ENCODE measurements at regions of chr9 and their contacts with region 1.

Region 1: DNA sequence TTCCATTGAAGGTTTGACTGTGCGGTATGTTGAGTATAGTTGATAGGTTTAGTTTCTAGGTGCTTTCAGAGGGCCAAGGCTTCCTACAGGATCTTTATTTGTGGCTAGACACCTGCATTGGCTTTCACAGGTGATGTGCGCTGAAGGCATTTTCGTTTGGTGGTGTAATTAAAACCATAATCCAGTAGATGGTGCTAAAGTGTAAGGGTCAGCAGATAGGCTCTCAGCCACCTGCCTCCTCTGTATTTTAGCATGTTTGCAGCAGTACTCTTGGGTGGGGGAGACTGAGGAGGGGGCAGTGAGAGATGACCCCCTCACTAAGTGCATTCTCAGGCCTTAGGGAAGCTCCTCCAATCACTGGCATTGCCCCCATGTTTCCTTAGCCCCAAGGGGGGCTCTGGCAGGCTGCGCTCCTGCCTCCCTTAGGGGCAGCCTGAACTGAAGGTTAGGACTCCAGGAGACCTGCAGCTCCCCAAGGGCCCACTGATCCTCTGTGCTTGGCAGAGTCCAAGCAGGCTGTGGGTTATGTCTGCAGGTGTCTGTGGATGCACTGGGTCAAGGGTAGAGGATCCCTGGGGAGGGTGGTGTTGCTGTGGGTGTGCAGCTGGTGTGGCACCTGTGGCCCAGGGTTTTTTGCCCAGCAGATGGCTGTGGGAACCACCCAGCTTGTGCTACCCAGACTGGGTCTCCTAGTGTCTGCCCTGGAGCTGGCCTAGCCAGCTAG is 23.4 kb downstream of the CDK20 start:
- DNase-seq: no peak
- ATAC-seq: peak; percentile 54
- H3K4me3 ChIP-seq: no peak overlapping the region
- H3K27ac ChIP-seq: no peak overlapping the region
- H3K4me1 ChIP-seq: no peaks in the 10 kb centered on the region
- H3K27me3 ChIP-seq: no peaks in the 10 kb centered on the region
- CTCF ChIP-seq: peak; percentile 29 to 52 (median 33); a peak in 4 of 6 replicates
- EP300 ChIP-seq: no peak
- POLR2A ChIP-seq: no peak
- RAD21 ChIP-seq: peak; percentile 56

Region 2: DNA sequence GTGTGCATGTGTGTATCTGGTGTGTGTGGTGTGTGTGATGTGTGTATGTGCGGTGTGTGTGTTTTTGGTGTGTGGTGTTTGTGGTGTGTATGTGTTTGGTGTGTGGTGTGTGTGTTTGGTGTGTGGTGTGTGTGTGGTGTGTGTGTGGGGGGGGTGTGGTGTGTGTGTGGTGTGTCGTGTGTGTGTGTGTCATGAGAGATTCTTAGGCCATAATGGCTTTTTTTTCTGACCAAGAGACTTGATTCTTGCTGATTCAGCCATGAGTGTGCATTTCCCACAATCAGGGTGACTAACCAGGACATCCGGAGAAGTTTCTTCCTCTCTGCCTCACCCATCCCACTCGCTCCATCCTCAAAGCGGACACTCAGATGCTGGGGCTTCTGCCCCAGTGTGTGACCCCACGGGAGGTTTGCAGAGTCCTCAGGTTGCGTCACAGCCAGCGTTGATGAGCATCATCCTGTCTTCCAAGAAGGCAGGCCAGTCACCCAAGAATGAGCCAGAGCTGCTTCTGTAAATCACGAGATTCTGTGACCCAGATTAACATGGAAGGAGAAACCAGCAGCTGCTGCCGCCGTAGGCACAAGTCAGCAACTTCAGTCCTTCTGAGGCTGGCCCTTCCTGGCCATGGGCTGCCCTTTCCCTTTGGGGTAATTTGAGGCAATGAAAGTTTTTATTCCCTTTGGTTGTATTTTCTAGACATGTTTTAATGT is 237.5 kb before region 1 on chr9:
- CTCF ChIA-PET with region 1: no interaction called
- POLR2A ChIA-PET with region 1: no interaction called
- RAD21 ChIA-PET with region 1: no interaction called
- SMC1A ChIA-PET with region 1: no interaction called
- in situ Hi-C with region 1: no loop called
- intact Hi-C with region 1: no loop called
- DNase-seq: no peak
- ATAC-seq: no peak
- H3K4me3 ChIP-seq: no peak overlapping the region
- H3K27ac ChIP-seq: no peak overlapping the region
- H3K4me1 ChIP-seq: peaks cover 11% of the 10 kb centered on the region; the same call in 1 of the 2 replicates
- H3K27me3 ChIP-seq: peaks cover 0 to 2% of the 10 kb centered on the region in 2 experiments; a peak in 1 of 4 replicates
- CTCF ChIP-seq: no peak
- EP300 ChIP-seq: no peak
- POLR2A ChIP-seq: no peak
- RAD21 ChIP-seq: no peak

Region 3: DNA sequence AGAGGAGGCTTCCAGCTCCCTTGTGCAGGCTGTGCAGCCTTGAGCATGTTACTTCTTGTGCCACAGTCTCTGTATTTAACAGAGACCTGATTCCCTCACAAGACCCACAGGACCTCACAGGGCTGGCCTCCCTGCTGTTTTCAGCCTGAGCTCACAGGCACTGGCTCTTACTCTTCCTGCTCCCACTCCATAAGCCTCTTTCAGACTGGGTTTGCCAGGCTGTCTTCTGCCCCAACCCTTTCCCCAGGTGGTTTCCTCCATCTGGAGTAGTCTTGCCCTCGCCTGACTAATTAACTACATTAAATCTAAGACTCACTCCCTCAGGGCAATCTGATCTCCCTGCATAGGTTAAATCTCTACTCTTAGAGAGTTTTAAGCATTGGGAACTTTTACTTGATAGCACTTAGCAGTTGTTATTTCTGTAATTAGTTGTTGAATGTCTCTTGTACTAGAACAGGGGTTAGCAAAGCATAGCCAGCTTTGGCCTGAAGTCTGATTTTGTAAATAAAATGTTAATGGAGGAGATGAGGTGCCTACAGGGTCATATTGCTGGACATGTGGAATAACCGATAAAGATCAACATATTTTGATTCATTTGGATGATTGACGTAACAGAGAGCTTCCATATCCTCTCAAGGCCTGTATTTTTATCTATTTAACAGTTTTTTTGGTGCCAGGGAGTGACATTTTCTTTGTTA is 96.9 kb before region 1 on chr9:
- CTCF ChIA-PET with region 1: no interaction called
- POLR2A ChIA-PET with region 1: no interaction called
- RAD21 ChIA-PET with region 1: no interaction called
- SMC1A ChIA-PET with region 1: no interaction called
- in situ Hi-C with region 1: no loop called
- intact Hi-C with region 1: no loop called
- DNase-seq: no peak
- ATAC-seq: no peak
- H3K4me3 ChIP-seq: no peak overlapping the region
- H3K27ac ChIP-seq: no peak overlapping the region
- H3K4me1 ChIP-seq: no peaks in the 10 kb centered on the region
- H3K27me3 ChIP-seq: no peaks in the 10 kb centered on the region
- CTCF ChIP-seq: no peak
- EP300 ChIP-seq: no peak
- POLR2A ChIP-seq: no peak
- RAD21 ChIP-seq: no peak

Region 4: DNA sequence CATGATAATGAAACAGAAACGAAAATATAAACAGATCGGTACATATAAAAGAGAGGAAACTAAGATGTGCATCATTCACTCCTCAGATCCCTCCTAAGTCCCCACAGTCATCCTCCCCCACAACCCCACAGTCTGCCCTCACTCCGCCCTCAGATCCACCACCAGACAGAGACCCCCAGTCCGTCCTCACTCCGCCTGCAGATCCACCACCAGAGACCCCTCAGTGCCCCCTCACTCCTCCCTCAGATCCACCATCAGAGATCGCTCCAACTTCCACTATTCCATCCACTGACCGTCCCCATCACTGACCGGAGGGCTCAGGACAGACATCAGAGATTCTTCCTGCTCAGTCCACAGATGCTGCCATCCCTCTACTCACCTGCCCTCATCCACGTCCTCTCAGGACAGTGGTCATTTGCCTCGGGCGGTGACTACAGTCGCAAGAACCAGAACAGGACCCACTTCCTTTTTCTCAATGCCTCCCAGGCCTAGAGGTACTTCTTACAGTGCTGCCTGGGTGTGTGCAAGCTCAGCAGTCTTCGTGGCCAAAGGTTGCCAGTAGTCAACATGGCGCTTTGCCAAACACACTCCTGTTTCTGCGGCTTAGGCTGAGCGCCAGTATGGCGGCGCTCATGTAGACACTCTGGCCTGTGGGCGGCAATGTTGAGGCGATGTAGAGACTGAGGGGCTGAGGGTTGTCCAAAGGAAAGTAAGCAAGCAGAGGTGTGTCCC is 41.5 kb before region 1 on chr9:
- CTCF ChIA-PET with region 1: no interaction called
- POLR2A ChIA-PET with region 1: no interaction called
- RAD21 ChIA-PET with region 1: no interaction called
- SMC1A ChIA-PET with region 1: no interaction called
- in situ Hi-C with region 1: no loop called
- intact Hi-C with region 1: no loop called
- DNase-seq: no peak
- ATAC-seq: peak; percentile 42; the same call in 1 of the 3 replicates
- H3K4me3 ChIP-seq: no peak overlapping the region
- H3K27ac ChIP-seq: no peak overlapping the region
- H3K4me1 ChIP-seq: no peaks in the 10 kb centered on the region
- H3K27me3 ChIP-seq: no peaks in the 10 kb centered on the region
- CTCF ChIP-seq: no peak
- EP300 ChIP-seq: no peak
- POLR2A ChIP-seq: no peak
- RAD21 ChIP-seq: no peak

Region 5: DNA sequence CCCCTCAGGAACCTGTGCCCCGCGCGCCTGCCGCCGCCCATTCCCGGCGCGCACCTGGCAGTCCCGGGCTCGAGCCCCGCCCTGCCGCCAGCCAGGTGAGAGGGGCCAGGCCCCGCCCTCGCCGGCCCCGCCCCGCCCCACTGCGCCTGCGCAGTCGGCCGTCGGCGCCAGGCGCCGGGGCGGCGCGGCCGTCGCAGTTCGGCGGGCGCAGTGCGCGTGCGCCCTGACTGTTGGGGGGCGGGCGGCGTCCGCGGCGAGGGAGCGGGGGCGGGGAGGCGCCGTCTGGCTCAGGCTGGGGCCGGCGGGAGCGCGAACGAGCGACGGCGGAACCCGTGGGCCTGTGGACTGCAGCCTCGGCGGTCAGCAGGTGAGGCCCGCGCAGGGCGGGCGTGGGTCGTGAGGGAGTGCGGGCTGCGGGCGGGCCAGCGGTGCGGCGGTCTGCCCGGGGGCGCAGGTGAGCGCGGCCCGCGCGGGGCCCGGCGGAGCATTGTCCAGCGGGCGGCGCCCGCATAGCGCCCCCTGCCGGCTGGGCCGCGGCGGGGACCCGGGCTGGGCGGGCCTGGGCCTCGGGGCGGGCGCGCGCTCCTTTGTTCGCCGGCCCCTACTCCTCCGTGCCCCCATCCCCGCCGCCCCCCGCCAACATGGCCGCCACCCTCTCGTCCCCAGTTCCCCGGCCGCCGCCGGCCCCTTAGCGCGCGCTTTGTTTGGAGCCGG is 437.4 kb after region 1 on chr9 and contains the start of gene SPIN1:
- CTCF ChIA-PET with region 1: no interaction called
- POLR2A ChIA-PET with region 1: no interaction called
- RAD21 ChIA-PET with region 1: no interaction called
- SMC1A ChIA-PET with region 1: no interaction called
- in situ Hi-C with region 1: no loop called
- intact Hi-C with region 1: loop called (anchors 5 kb)
- DNase-seq: no peak
- ATAC-seq: peak; percentile 92
- H3K4me3 ChIP-seq: peak within 1 kb of the TSS; percentile 98
- H3K27ac ChIP-seq: peak within 1 kb of the TSS; percentile 56; the same call in 1 of the 2 replicates
- H3K4me1 ChIP-seq: peaks cover 25% of the 10 kb centered on the region
- H3K27me3 ChIP-seq: no peaks in the 10 kb centered on the region
- CTCF ChIP-seq: peak; percentile 16 to 54 (median 45); a peak in 3 of 6 replicates
- EP300 ChIP-seq: no peak
- POLR2A ChIP-seq: peak; percentile 75
- RAD21 ChIP-seq: peak; percentile 46; the same call in 1 of the 2 replicates
- polyA plus RNA-seq, gene SPIN1: 6.6 to 8.1 TPM

Region 6: GRCh38 chr9:88578121-88579054 is 627.5 kb after region 1 on chr9:
- CTCF ChIA-PET with region 1: interaction called, 8 read pairs
- POLR2A ChIA-PET with region 1: no interaction called
- RAD21 ChIA-PET with region 1: no interaction called
- SMC1A ChIA-PET with region 1: no interaction called
- in situ Hi-C with region 1: loop called (anchors 5 kb)
- intact Hi-C with region 1: loop called (anchors 5 kb)
- DNase-seq: peak; percentile 7
- ATAC-seq: peak; percentile 96
- H3K4me3 ChIP-seq: no peak overlapping the region
- H3K27ac ChIP-seq: no peak overlapping the region
- H3K4me1 ChIP-seq: no peaks in the 10 kb centered on the region
- H3K27me3 ChIP-seq: no peaks in the 10 kb centered on the region
- CTCF ChIP-seq: peak; percentile 91 to 95 (median 94); a peak in 5 of 6 replicates
- EP300 ChIP-seq: no peak
- POLR2A ChIP-seq: no peak
- RAD21 ChIP-seq: peak; percentile 80

Region 7: DNA sequence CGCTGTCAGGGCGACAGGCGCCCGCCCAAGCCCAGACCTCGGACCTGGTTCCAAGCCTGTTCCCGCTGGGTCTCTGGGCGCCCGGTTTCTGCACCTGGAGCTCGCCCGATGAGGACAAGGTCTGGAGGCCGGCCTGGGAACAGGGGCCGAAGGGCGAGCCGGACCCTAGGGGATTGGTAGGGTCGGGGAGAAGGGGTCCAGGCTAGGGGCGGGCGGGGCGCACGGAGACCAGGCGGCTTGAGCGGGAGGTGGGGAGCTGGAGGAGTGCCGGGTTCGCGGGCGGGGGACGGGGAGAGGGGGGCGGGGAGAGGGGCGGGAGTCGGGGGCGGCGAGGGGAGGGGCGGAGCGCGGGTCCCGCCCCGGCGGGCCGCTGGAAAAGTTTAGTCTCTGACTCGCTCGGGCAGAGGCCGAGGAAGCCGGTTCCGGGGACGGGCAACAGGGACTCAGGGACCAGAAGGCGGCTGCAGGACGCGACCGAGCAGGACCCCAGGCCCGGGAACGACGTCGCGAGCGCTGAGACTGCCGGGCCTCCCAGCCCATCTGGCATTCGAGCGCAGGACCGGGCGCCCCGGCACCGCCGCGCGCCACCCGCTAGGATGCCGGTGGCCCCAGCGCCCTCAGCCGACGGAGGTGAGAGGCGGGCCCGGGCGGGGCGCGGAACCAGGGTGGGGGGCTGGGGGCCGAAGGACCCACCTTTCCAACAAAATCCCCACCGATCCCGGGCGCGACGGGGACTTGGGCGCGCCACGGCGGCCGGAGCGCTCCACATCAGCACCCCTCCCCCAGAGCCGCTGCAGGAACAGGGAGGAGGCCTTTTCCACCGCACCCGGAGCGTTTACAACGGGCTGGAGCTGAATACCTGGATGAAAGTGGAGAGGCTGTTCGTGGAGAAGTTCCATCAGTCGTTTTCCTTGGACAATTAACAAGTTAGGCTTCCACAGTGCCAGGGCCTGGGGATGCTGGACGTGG is 1040.4 kb after region 1 on chr9 and contains the start of gene S1PR3:
- CTCF ChIA-PET with region 1: no interaction called
- POLR2A ChIA-PET with region 1: no interaction called
- RAD21 ChIA-PET with region 1: no interaction called
- SMC1A ChIA-PET with region 1: no interaction called
- in situ Hi-C with region 1: no loop called
- intact Hi-C with region 1: loop called (anchors 10 kb)
- DNase-seq: no peak
- ATAC-seq: no peak
- H3K4me3 ChIP-seq: no peak within 1 kb of the TSS
- H3K27ac ChIP-seq: no peak within 1 kb of the TSS
- H3K4me1 ChIP-seq: no peaks in the 10 kb centered on the region; the same call in 1 of the 2 replicates
- H3K27me3 ChIP-seq: peaks cover 1 to 3% of the 10 kb centered on the region in 2 experiments; a peak in 3 of 4 replicates
- CTCF ChIP-seq: no peak
- EP300 ChIP-seq: no peak
- POLR2A ChIP-seq: no peak; the same call in 1 of the 2 replicates
- RAD21 ChIP-seq: no peak
- polyA plus RNA-seq, gene S1PR3: not detected

Region 8: DNA sequence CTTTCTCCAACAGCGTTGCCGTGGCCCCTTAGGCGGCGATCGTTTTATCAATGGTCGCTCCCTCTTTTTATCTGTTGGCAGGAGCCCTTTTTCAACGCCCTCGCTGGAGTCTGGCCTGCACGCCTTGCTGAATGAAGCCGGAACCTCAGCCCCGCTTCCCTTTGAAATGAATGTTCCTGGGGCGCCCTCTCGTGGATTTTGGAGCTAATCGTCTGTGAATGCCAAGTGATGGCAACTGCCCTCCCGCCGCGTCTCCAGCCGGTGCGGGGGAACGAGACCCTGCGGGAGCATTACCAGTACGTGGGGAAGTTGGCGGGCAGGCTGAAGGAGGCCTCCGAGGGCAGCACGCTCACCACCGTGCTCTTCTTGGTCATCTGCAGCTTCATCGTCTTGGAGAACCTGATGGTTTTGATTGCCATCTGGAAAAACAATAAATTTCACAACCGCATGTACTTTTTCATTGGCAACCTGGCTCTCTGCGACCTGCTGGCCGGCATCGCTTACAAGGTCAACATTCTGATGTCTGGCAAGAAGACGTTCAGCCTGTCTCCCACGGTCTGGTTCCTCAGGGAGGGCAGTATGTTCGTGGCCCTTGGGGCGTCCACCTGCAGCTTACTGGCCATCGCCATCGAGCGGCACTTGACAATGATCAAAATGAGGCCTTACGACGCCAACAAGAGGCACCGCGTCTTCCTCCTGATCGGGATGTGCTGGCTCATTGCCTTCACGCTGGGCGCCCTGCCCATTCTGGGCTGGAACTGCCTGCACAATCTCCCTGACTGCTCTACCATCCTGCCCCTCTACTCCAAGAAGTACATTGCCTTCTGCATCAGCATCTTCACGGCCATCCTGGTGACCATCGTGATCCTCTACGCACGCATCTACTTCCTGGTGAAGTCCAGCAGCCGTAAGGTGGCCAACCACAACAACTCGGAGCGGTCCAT is 1050.3 kb after region 1 on chr9:
- CTCF ChIA-PET with region 1: no interaction called
- POLR2A ChIA-PET with region 1: no interaction called
- RAD21 ChIA-PET with region 1: interaction called, 4 read pairs
- SMC1A ChIA-PET with region 1: no interaction called
- in situ Hi-C with region 1: loop called (anchors 10 kb)
- intact Hi-C with region 1: loop called (anchors 10 kb)
- DNase-seq: no peak
- ATAC-seq: peak; percentile 91
- H3K4me3 ChIP-seq: no peak overlapping the region
- H3K27ac ChIP-seq: no peak overlapping the region
- H3K4me1 ChIP-seq: no peaks in the 10 kb centered on the region
- H3K27me3 ChIP-seq: peaks cover 0 to 1% of the 10 kb centered on the region in 2 experiments; a peak in 1 of 4 replicates
- CTCF ChIP-seq: peak; percentile 58 to 72 (median 63); a peak in 5 of 6 replicates
- EP300 ChIP-seq: no peak
- POLR2A ChIP-seq: no peak
- RAD21 ChIP-seq: peak; percentile 85